ENCODE measurements at regions of chr3 and their contacts with region 1.

Region 1: DNA sequence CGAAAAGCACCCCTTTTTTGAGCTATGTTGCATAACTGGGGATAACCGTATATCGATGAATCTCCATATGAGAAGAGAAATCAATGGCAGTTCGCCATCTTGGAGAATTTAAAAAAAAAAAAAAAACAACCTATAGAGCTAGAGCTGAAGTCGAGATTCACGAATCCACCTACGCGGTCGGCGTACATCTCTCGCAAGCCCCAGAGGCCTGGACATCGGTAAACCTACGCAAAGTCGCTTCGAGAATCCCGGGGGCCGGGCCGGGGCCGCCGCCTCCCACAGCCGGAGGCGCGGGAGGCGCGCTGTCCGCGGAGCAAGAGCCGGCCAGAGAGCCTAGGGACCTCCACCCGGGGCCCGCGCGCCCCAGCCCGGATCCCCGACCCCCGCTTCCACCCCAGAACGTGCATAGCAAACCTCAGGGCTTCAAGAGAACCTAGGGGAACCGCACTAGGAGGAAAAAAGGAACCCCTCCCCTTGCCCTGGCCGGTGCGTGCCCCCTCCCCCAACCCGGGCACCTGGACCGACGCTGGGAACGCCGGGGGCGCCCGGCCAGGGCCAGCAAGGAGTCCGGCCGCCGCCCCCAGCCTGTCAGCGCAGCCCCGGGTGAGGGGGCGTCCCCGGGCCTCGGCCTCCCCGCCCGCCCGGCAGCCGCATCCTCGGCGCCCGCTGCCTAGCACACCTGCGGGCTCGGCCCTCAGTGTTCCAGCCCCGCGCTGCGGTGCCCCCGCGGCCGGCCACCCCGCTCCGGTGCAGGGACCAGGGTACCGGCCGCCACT is 567 bp downstream of the PFN2 start:
- DNase-seq: no peak
- H3K4me3 ChIP-seq: peak overlapping the region; percentile 93 to 98 (median 96)
- H3K27ac ChIP-seq: peak overlapping the region; percentile 95 to 98 (median 98)
- H3K4me1 ChIP-seq: peaks cover 14 to 44% (median 40%) of the 10 kb centered on the region in 4 donors
- H3K27me3 ChIP-seq: no peaks in the 10 kb centered on the region
- CTCF ChIP-seq: no peak
- EP300 ChIP-seq: no peak
- POLR2A ChIP-seq: peak; percentile 14

Region 2: DNA sequence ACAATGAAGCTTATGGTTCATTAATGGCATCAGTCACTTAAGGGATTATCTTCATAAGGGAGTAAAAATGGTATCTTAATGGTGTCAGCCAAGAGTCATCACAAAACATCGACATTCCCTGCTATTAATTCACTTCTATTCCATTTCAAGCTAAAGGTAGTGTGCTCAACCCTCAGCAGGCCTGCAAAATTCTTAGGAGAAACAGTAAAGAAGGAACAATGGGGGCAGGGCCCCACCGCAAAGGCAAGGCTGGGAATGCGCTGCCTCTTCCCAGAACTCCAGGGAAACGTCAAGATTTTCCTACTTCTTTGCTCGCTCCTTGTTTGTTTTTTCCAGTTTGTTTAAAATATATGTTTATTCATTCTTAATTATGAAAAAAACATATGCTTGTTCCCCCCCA is 250.7 kb after region 1 on chr3:
- intact Hi-C with region 1: loop called (anchors 5 kb)
- DNase-seq: peak; percentile 75
- H3K4me3 ChIP-seq: peak overlapping the region; percentile 40 to 48 (median 44)
- H3K27ac ChIP-seq: peak overlapping the region in 1 of 4 donors; percentile 47
- H3K4me1 ChIP-seq: peaks cover 10 to 32% (median 27%) of the 10 kb centered on the region in 4 donors
- H3K27me3 ChIP-seq: no peaks in the 10 kb centered on the region
- CTCF ChIP-seq: no peak
- EP300 ChIP-seq: no peak
- POLR2A ChIP-seq: no peak

Measured in esophagus muscularis mucosa (tissue), 4 donors.